ENCODE measurements at regions of chr1 and their contacts with region 1.

Region 1: DNA sequence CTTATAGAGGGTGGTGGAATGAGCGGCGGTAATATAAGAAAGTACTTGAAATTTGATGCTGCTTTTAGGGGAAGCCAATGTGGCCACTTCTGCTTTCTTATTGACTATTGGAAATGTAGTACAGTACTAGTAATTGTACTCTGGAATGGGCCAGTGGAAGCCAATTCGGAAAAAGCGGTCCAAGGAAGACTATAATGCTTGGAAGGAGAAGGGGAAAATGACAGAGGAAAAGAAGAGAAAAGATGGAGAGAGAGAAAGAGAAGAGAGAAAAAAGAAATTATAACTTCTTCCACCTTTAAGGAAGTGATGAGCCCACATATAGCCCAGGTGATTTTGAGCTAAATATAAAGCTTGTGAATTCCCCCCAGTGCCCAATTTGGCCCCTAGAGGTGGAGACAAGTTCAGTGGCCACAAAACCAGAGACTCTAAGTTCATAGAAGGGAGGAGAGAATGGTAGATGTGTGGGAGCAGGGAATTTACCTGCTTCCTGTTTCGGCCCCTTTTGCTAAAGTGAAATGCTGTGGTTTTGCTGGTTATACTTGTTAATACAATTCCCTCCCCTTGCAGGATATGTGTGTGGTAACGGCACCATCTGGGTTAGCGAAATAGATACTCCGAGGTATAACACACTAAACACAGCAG is 35.7 kb upstream of the DUSP10 start:
- DNase-seq: peak; percentile 79
- H3K4me3 Mint-ChIP-seq: peak overlapping the region; percentile 49
- H3K27ac Mint-ChIP-seq: peak overlapping the region; percentile 89
- H3K4me1 Mint-ChIP-seq: peaks cover 74% of the 10 kb centered on the region
- H3K27me3 Mint-ChIP-seq: no peaks in the 10 kb centered on the region

Region 2: GRCh38 chr1:221725735-221726672 is 51.5 kb before region 1 on chr1:
- CTCF ChIA-PET with region 1: no interaction called
- intact Hi-C with region 1: loop called (anchors 1 kb)
- DNase-seq: no peak
- H3K4me3 Mint-ChIP-seq: peak overlapping the region; percentile 69
- H3K27ac Mint-ChIP-seq: peak overlapping the region; percentile 99
- H3K4me1 Mint-ChIP-seq: peaks cover 67% of the 10 kb centered on the region
- H3K27me3 Mint-ChIP-seq: no peaks in the 10 kb centered on the region

Region 3: GRCh38 chr1:221766210-221766609 is 11.3 kb before region 1 on chr1:
- CTCF ChIA-PET with region 1: interaction called, 3 read pairs
- intact Hi-C with region 1: loop called (anchors 1 kb)
- DNase-seq: no peak
- H3K4me3 Mint-ChIP-seq: no peak overlapping the region
- H3K27ac Mint-ChIP-seq: no peak overlapping the region
- H3K4me1 Mint-ChIP-seq: peaks cover 13% of the 10 kb centered on the region
- H3K27me3 Mint-ChIP-seq: no peaks in the 10 kb centered on the region

Region 4: GRCh38 chr1:221824025-221824424 is 46.5 kb after region 1 on chr1:
- CTCF ChIA-PET with region 1: interaction called, 3 read pairs
- intact Hi-C with region 1: loop called (anchors 1 kb)
- DNase-seq: peak; percentile 51
- H3K4me3 Mint-ChIP-seq: no peak overlapping the region
- H3K27ac Mint-ChIP-seq: peak overlapping the region; percentile 27
- H3K4me1 Mint-ChIP-seq: peaks cover 47% of the 10 kb centered on the region
- H3K27me3 Mint-ChIP-seq: peaks cover 4% of the 10 kb centered on the region

Region 5: GRCh38 chr1:221839796-221840395 is 62.3 kb after region 1 on chr1:
- CTCF ChIA-PET with region 1: interaction called, 3 read pairs
- intact Hi-C with region 1: loop called (anchors 1 kb)
- DNase-seq: peak; percentile 87
- H3K4me3 Mint-ChIP-seq: no peak overlapping the region
- H3K27ac Mint-ChIP-seq: peak overlapping the region; percentile 9
- H3K4me1 Mint-ChIP-seq: peaks cover 35% of the 10 kb centered on the region
- H3K27me3 Mint-ChIP-seq: peaks cover 5% of the 10 kb centered on the region

Region 6: DNA sequence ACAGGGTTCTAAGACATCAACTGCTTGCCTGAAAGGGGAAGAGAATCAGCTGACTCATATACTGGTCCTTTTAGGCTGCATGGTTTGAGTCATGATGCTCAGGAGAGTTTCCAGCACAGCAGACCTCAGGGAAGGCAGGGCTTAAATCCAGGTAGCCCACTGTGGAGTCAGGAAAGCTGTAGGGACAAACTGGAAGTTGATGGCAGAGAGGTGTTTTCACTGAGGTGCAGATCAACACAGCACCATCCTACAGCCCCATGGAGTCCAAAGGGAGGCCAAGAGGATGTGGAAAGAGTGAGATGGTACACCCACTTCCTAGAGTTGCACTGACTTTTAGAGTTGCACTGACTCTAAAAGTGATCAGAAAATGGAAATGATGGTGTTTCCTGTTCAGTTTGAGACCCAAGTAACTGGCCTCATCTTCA is 216.7 kb after region 1 on chr1:
- CTCF ChIA-PET with region 1: no interaction called
- intact Hi-C with region 1: loop called (anchors 1 kb)
- DNase-seq: peak; percentile 55
- H3K4me3 Mint-ChIP-seq: no peak overlapping the region
- H3K27ac Mint-ChIP-seq: peak overlapping the region; percentile 94
- H3K4me1 Mint-ChIP-seq: peaks cover 33% of the 10 kb centered on the region
- H3K27me3 Mint-ChIP-seq: no peaks in the 10 kb centered on the region

Region 7: GRCh38 chr1:222275729-222276465 is 498.3 kb after region 1 on chr1:
- CTCF ChIA-PET with region 1: no interaction called
- intact Hi-C with region 1: no loop called
- DNase-seq: no peak
- H3K4me3 Mint-ChIP-seq: no peak overlapping the region
- H3K27ac Mint-ChIP-seq: no peak overlapping the region
- H3K4me1 Mint-ChIP-seq: no peaks in the 10 kb centered on the region
- H3K27me3 Mint-ChIP-seq: no peaks in the 10 kb centered on the region